CD4-positive, alpha-beta T cell (primary cell): ENCODE measurements at regions of chr12 and their contacts with region 1.

Region 1: DNA sequence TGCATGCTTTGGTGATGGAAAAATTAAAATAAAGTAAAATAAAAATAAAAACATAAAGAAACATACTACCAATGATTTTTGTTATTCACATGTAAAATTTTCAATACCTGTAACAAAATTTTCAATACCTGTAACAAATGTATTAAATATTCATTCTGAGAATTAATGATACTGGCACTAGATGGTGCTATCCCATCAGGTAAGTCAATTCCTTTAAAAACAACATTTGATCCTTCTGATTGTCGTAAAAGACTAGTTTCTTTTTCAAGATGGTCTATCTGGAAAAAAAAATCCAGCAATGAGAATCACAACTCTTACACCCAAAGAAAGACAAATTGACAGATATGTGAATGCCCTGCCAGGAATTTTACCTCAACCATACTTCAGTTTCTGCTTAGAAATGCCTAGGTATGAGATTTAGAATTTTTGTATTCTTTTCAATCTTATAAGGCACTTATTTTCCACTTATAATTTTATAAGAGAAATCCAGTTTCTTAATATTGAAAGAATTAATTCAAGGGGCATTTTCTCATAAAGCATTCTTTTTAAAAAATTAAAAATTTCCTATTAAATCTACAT is 30.7 kb downstream of the CEP290 start:
- DNase-seq: peak in 3 of 14 experiments; percentile 45 to 52 (median 46)
- ATAC-seq: no peak
- H3K4me3 ChIP-seq: no peak overlapping the region
- H3K4me3 Mint-ChIP-seq: no peak overlapping the region
- H3K27ac ChIP-seq: no peak overlapping the region
- H3K27ac Mint-ChIP-seq: no peak overlapping the region
- H3K4me1 ChIP-seq: no peaks in the 10 kb centered on the region
- H3K4me1 Mint-ChIP-seq: no peaks in the 10 kb centered on the region
- H3K27me3 ChIP-seq: no peaks in the 10 kb centered on the region
- H3K27me3 Mint-ChIP-seq: no peaks in the 10 kb centered on the region
- CTCF ChIP-seq: peak; percentile 44

Region 2: GRCh38 chr12:89461649-89462612 is 1350.8 kb after region 1 on chr12:
- CTCF ChIA-PET with region 1: no interaction called
- POLR2A ChIA-PET with region 1: no interaction called
- intact Hi-C with region 1: loop called in 1 of 2 experiments (anchors 5 kb)
- DNase-seq: peak in 3 of 14 experiments; percentile 68 to 78 (median 69)
- ATAC-seq: peak; percentile 88
- H3K4me3 ChIP-seq: no peak overlapping the region
- H3K4me3 Mint-ChIP-seq: peak overlapping the region; percentile 40
- H3K27ac ChIP-seq: no peak overlapping the region
- H3K27ac Mint-ChIP-seq: no peak overlapping the region
- H3K4me1 ChIP-seq: no peaks in the 10 kb centered on the region
- H3K4me1 Mint-ChIP-seq: peaks cover 16% of the 10 kb centered on the region
- H3K27me3 ChIP-seq: no peaks in the 10 kb centered on the region
- H3K27me3 Mint-ChIP-seq: no peaks in the 10 kb centered on the region
- CTCF ChIP-seq: peak; percentile 81